SK-N-SH (cell line): ENCODE measurements at regions of chr19 and their contacts with region 1.

Region 1: GRCh38 chr19:10269333-10270179 is 1.4 kb upstream of the ICAM1 start:
- DNase-seq: peak; percentile 91
- H3K4me3 ChIP-seq: peak overlapping the region; percentile 23 to 24; a peak in 3 of 4 replicates
- H3K27ac ChIP-seq: no peak overlapping the region
- H3K4me1 ChIP-seq: peaks cover 0 to 4% of the 10 kb centered on the region in 2 experiments; a peak in 2 of 4 replicates
- H3K27me3 ChIP-seq: no peaks in the 10 kb centered on the region
- CTCF ChIP-seq: peak; percentile 93
- EP300 ChIP-seq: no peak
- RAD21 ChIP-seq: peak; percentile 93

Region 2: GRCh38 chr19:10259162-10259905 is 10.2 kb before region 1 on chr19:
- CTCF ChIA-PET with region 1: interaction called, 81 read pairs
- POLR2A ChIA-PET with region 1: interaction called, 4 read pairs
- DNase-seq: peak; percentile 88
- H3K4me3 ChIP-seq: no peak overlapping the region; a peak in 1 of 4 replicates
- H3K27ac ChIP-seq: no peak overlapping the region
- H3K4me1 ChIP-seq: no peaks in the 10 kb centered on the region; a peak in 1 of 4 replicates
- H3K27me3 ChIP-seq: no peaks in the 10 kb centered on the region
- CTCF ChIP-seq: peak; percentile 73
- EP300 ChIP-seq: no peak
- RAD21 ChIP-seq: peak; percentile 73

Region 3: GRCh38 chr19:10292206-10292788 is 22.7 kb after region 1 on chr19:
- CTCF ChIA-PET with region 1: interaction called, 65 read pairs
- POLR2A ChIA-PET with region 1: no interaction called
- DNase-seq: peak; percentile 92
- H3K4me3 ChIP-seq: peak overlapping the region; percentile 45 to 77
- H3K27ac ChIP-seq: no peak overlapping the region
- H3K4me1 ChIP-seq: peaks cover 0 to 39% of the 10 kb centered on the region in 2 experiments; a peak in 1 of 4 replicates
- H3K27me3 ChIP-seq: no peaks in the 10 kb centered on the region; the same call in 1 of the 2 replicates
- CTCF ChIP-seq: no peak
- EP300 ChIP-seq: no peak
- RAD21 ChIP-seq: no peak

Region 4: GRCh38 chr19:10332955-10333757 is 63.6 kb after region 1 on chr19 and contains the start of gene RAVER1:
- CTCF ChIA-PET with region 1: interaction called, 18 read pairs
- POLR2A ChIA-PET with region 1: no interaction called
- DNase-seq: peak; percentile 99
- H3K4me3 ChIP-seq: peak within 1 kb of the TSS; percentile 81 to 95
- H3K27ac ChIP-seq: peak within 1 kb of the TSS; percentile 93 to 97
- H3K4me1 ChIP-seq: peaks cover 0 to 22% of the 10 kb centered on the region in 2 experiments; a peak in 1 of 4 replicates
- H3K27me3 ChIP-seq: no peaks in the 10 kb centered on the region
- CTCF ChIP-seq: no peak
- EP300 ChIP-seq: no peak
- RAD21 ChIP-seq: no peak
- polyA plus RNA-seq, gene RAVER1: 3.0 and 8.2 TPM in 2 replicates

Region 5: GRCh38 chr19:10388957-10389356 is 119.4 kb after region 1 on chr19:
- CTCF ChIA-PET with region 1: interaction called, 596 read pairs
- POLR2A ChIA-PET with region 1: interaction called, 10 read pairs
- DNase-seq: peak; percentile 76
- H3K4me3 ChIP-seq: peak overlapping the region in 1 of 2 experiments; percentile 36; a peak in 1 of 4 replicates
- H3K27ac ChIP-seq: no peak overlapping the region
- H3K4me1 ChIP-seq: no peaks in the 10 kb centered on the region
- H3K27me3 ChIP-seq: no peaks in the 10 kb centered on the region
- CTCF ChIP-seq: peak; percentile 96
- EP300 ChIP-seq: no peak
- RAD21 ChIP-seq: peak; percentile 84

Region 6: GRCh38 chr19:10416380-10417257 is 147.1 kb after region 1 on chr19:
- CTCF ChIA-PET with region 1: interaction called, 25 read pairs
- POLR2A ChIA-PET with region 1: no interaction called
- DNase-seq: peak; percentile 99
- H3K4me3 ChIP-seq: peak overlapping the region; percentile 56 to 64
- H3K27ac ChIP-seq: no peak overlapping the region
- H3K4me1 ChIP-seq: peaks cover 5 to 10% of the 10 kb centered on the region in 2 experiments; a peak in 1 of 4 replicates
- H3K27me3 ChIP-seq: peaks cover 37% of the 10 kb centered on the region
- CTCF ChIP-seq: peak; percentile 84
- EP300 ChIP-seq: no peak
- RAD21 ChIP-seq: peak; percentile 21; the same call in 1 of the 2 replicates